HEK293T (cell line): ENCODE measurements at regions of chr12 and their contacts with region 1.

Region 1: GRCh38 chr12:95003213-95003920 is at the start of gene NDUFA12:
- DNase-seq: peak; percentile 96

Region 2: DNA sequence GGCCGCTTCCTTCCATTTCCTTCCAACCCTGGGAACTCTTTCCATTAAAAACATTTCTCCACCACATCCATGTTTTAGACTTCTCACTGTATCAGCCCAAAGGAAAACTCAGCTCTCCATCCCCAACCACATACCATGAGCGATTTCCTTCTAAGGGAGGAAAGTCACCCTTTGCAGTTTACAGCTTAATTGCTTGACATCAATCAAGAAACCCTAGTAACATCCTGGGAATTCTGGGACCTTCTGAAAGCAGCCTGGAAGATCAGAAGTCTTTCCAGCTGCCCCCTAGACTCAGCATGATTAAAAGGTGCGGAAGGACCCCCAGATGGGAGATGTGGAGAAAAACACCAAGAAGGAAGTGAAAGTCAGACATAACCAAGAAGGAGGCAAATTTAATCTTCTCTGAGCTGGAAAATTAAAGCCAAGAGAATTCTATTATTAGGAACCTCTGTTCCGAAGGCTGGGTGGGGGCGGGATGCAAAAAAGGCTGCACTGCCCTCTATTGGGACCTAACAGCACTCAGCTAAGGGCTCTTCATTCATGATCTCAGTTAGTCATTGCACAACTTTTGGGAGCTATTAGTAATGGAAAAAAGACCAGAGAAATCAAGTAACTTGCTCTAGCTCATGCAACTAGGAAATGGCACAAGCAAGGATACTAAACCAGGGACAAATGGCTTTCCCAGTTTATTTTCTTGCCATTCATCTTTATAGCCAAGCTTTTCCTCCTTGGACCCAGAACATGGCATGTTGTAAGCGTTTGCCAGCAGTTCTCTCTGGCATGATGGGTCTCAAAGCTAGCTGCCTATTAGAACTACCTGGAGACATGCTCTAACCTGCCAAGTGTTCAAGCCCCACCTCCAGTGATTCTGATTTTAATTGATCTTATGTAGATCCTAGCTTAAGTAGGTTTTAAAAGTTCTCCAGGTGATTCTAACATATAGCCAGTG is 928.1 kb before region 1 on chr12:
- CTCF ChIA-PET with region 1: no interaction called
- POLR2A ChIA-PET with region 1: no interaction called
- DNase-seq: peak; percentile 68

Region 3: GRCh38 chr12:94909663-94910062 is 93.7 kb before region 1 on chr12:
- CTCF ChIA-PET with region 1: no interaction called
- POLR2A ChIA-PET with region 1: no interaction called
- DNase-seq: no peak

Region 4: GRCh38 chr12:94982456-94982855 is 20.9 kb before region 1 on chr12:
- CTCF ChIA-PET with region 1: no interaction called
- POLR2A ChIA-PET with region 1: interaction called, 12 read pairs
- DNase-seq: no peak

Region 5: DNA sequence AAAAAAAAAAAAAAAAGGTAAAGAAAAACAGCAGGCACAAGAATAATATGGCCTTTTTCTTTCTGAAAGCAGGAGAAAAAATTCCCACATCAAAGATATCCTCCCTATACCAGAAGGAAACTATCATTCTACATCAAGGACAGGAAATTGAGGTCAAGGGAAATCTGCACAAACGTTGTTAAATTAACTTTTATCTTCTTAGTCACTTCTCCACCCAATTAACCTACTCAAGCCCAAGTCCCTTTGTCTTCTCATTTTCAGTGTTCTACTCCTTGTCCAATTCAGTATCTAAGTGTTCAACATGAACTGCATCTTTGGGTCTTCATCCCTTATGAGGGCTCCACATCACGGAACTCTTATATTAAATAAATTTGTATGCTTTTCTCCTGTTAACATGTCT is 15.6 kb before region 1 on chr12:
- CTCF ChIA-PET with region 1: no interaction called
- POLR2A ChIA-PET with region 1: interaction called, 15 read pairs
- DNase-seq: no peak

Region 6: GRCh38 chr12:95014554-95014953 is 11.2 kb after region 1 on chr12:
- CTCF ChIA-PET with region 1: no interaction called
- POLR2A ChIA-PET with region 1: interaction called, 14 read pairs
- DNase-seq: no peak